ENCODE measurements at regions of chr12 and their contacts with region 1.

Region 1: DNA sequence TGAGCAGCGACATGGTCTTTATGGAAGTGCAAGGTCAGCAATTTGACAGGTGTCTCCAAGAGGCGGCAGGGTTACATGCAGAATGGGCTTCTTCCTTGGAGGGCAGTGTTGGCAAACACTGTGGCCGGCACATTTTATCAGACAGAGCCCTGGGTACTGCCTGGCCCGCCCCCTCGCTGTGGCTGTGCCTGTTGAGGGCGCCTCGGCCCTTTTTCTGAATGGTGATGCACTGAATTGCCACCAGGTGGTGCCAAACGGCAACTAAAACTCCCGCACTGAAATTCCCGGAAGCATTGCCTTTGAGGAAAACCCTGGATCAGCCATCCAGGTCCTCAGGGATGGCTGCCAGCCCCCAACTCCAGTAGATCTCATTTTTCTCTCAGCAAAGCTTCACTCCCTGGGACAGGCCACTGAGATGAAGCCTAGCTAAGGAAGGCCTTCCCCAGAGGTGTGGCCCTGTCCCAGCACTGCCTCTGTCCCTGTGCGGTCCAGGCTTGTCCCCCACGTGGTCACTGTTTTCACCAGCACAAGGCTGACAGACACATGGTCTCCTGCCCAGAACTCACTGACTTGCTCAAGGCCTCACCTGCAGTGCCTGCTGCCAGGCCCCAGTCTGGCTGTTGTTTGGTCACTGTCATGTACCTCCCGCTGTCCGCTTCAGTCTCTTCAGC is 73.6 kb downstream of the TESC start:
- H3K4me3 Mint-ChIP-seq: no peak overlapping the region
- H3K27ac Mint-ChIP-seq: peak overlapping the region; percentile 21
- H3K4me1 Mint-ChIP-seq: peaks cover 6% of the 10 kb centered on the region
- H3K27me3 Mint-ChIP-seq: no peaks in the 10 kb centered on the region

Region 2: GRCh38 chr12:117119592-117120198 is 94.1 kb after region 1 on chr12:
- intact Hi-C with region 1: loop called (anchors 1 kb)
- H3K4me3 Mint-ChIP-seq: no peak overlapping the region
- H3K27ac Mint-ChIP-seq: no peak overlapping the region
- H3K4me1 Mint-ChIP-seq: peaks cover 12% of the 10 kb centered on the region
- H3K27me3 Mint-ChIP-seq: no peaks in the 10 kb centered on the region

Region 3: GRCh38 chr12:117165342-117165741 is 139.7 kb after region 1 on chr12:
- intact Hi-C with region 1: no loop called
- H3K4me3 Mint-ChIP-seq: no peak overlapping the region
- H3K27ac Mint-ChIP-seq: no peak overlapping the region
- H3K4me1 Mint-ChIP-seq: no peaks in the 10 kb centered on the region
- H3K27me3 Mint-ChIP-seq: no peaks in the 10 kb centered on the region

Measured in dendritic cell treated with granulocyte-macrophage colony-stimulating factor and Interleukin-4, amounts not matched to agents 40 ng/mL and 50 ng/mL, for 4 days (primary cell).